CD4-positive, alpha-beta memory T cell (primary cell): ENCODE measurements at regions of chr1 and their contacts with region 1.

Region 1: DNA sequence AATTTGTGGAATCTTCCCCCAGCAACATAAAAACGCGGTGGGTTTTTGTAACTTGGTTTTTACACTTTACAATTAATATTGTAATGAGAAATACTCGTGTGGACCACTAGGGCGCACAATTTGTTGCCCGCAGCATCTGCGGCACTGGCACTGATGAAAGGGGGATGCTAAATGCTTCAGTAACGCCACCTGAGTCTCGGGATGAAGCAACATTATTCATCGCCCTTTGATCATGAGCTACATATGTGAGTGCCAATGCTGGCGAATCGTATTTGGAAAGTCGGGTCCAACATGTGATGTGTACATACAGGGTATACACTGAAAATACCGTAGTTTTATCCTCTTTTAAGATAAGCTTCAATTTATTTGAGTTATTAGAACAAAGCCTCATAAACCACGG is 34.2 kb upstream of the COX20 start:
- DNase-seq: peak; percentile 38 to 48 (median 42)
- H3K4me3 ChIP-seq: no peak overlapping the region
- H3K4me3 Mint-ChIP-seq: peak overlapping the region in 1 of 8 donors; percentile 46
- H3K27ac ChIP-seq: no peak overlapping the region
- H3K27ac Mint-ChIP-seq: peak overlapping the region in 2 of 7 donors; percentile 48 to 49
- H3K4me1 ChIP-seq: no peaks in the 10 kb centered on the region
- H3K4me1 Mint-ChIP-seq: peaks cover 2 to 4% (median 3%) of the 10 kb centered on the region in 4 donors
- H3K27me3 ChIP-seq: no peaks in the 10 kb centered on the region
- H3K27me3 Mint-ChIP-seq: peaks cover 3 to 7% of the 10 kb centered on the region in 2 donors

Region 2: DNA sequence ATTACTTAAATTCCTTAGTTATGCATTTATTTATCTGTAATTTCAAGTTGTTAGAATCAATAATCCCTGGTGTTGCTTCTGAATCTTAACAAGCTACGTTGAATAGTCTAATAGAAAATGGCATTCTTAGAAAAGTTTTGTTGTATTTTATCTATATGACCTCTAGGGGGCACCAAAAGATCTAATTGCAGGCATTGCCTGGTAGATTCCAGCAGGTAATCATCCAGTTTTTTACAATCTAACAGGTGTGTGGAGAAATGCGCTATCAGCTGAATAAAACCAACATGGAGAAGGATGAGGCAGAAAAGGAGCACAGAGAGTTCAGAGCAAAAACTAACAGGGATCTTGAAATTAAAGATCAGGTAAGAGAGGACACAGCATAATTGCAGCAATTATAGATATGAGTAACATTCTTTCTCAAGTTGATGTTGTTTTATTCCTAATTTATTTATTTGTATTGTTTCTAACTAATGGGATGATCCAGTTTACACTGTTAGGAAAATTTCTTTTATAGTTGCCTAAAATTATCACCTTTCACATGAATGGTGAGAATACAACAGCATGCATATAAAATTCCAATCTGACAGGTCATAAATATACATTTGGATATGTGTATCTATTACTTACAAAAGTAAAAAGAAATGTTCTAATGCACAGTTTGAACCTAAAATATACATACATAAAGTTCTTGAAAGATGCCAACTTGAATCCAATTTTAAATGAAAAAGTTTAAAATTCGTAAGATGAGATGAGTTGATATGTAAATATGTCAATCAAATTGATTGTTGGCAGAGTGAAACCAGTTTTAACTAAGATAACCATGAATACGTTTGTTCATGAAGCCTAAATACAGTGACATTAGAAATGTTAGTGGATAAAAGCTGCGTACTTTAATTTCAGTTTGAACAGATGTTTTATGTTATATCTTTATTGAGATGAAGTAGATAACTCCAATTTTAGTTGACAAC is 1457.0 kb before region 1 on chr1:
- CTCF ChIA-PET with region 1: no interaction called
- POLR2A ChIA-PET with region 1: no interaction called
- intact Hi-C with region 1: loop called (anchors 5 kb)
- DNase-seq: peak in 4 of 5 donors; percentile 47 to 52 (median 50)
- H3K4me3 ChIP-seq: no peak overlapping the region
- H3K4me3 Mint-ChIP-seq: no peak overlapping the region
- H3K27ac ChIP-seq: no peak overlapping the region
- H3K27ac Mint-ChIP-seq: no peak overlapping the region
- H3K4me1 ChIP-seq: no peaks in the 10 kb centered on the region
- H3K4me1 Mint-ChIP-seq: peaks cover 0 to 4% (median 3%) of the 10 kb centered on the region in 4 donors
- H3K27me3 ChIP-seq: no peaks in the 10 kb centered on the region
- H3K27me3 Mint-ChIP-seq: no peaks in the 10 kb centered on the region

Region 3: GRCh38 chr1:244788493-244789275 is 12.6 kb before region 1 on chr1:
- CTCF ChIA-PET with region 1: interaction called, 11 read pairs
- POLR2A ChIA-PET with region 1: no interaction called
- intact Hi-C with region 1: no loop called
- DNase-seq: no peak
- H3K4me3 ChIP-seq: no peak overlapping the region
- H3K4me3 Mint-ChIP-seq: no peak overlapping the region
- H3K27ac ChIP-seq: no peak overlapping the region
- H3K27ac Mint-ChIP-seq: no peak overlapping the region
- H3K4me1 ChIP-seq: no peaks in the 10 kb centered on the region
- H3K4me1 Mint-ChIP-seq: peaks cover 0 to 1% (median 0%) of the 10 kb centered on the region in 4 donors
- H3K27me3 ChIP-seq: no peaks in the 10 kb centered on the region
- H3K27me3 Mint-ChIP-seq: no peaks in the 10 kb centered on the region

Region 4: DNA sequence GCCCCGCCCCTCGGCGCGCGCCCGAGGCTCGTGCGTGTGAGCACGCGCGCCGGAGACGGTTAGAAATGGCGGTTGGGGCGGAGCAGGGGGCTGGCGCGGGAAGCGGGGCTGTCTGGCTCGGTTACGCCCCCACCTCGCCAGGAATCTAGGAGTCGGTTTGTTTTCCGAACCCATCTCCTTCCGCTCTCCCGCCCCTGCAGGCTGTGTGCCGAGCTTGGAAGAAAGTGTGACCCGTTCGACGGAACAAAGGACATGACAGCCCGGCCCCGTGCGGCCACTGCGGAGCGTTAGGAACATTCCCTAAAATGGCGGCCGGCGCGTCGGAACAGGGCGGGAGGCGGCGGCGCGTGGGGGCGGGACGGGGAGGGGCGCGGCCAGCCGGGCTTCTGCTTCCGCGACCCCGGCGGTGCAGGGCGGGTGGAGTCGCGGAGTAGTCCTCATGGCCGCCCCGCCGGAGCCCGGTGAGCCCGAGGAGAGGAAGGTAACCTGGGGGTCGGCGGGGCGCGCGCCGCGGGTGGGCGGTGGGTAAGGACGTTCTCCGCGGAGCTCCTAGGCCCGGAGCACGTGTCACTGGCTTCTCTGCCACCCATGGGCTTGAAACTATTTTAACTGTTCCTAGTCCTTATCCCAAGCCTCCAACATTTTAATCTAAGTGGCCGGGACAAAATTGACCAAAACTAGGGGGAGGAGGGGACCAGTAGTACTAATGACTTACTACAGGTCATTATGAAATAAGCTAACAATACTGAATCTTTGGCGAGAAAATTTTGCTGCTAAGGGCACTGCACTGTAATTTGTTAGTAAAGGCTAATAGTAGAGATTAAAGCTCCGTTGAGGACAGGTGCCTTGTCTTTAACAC is 34.3 kb after region 1 on chr1 and contains the start of gene COX20:
- CTCF ChIA-PET with region 1: interaction called, 20 read pairs
- POLR2A ChIA-PET with region 1: interaction called, 22 read pairs
- intact Hi-C with region 1: loop called (anchors 1 kb)
- DNase-seq: peak; percentile 89 to 96 (median 94)
- H3K4me3 ChIP-seq: peak within 1 kb of the TSS; percentile 74 to 87
- H3K4me3 Mint-ChIP-seq: peak within 1 kb of the TSS; percentile 89 to 98 (median 96)
- H3K27ac ChIP-seq: peak within 1 kb of the TSS; percentile 94
- H3K27ac Mint-ChIP-seq: peak within 1 kb of the TSS; percentile 93 to 100 (median 99)
- H3K4me1 ChIP-seq: peaks cover 52% of the 10 kb centered on the region
- H3K4me1 Mint-ChIP-seq: peaks cover 35 to 67% (median 42%) of the 10 kb centered on the region in 4 donors
- H3K27me3 ChIP-seq: no peaks in the 10 kb centered on the region
- H3K27me3 Mint-ChIP-seq: no peaks in the 10 kb centered on the region
- total RNA-seq, gene COX20: 31.3 to 32.9 TPM

Region 5: DNA sequence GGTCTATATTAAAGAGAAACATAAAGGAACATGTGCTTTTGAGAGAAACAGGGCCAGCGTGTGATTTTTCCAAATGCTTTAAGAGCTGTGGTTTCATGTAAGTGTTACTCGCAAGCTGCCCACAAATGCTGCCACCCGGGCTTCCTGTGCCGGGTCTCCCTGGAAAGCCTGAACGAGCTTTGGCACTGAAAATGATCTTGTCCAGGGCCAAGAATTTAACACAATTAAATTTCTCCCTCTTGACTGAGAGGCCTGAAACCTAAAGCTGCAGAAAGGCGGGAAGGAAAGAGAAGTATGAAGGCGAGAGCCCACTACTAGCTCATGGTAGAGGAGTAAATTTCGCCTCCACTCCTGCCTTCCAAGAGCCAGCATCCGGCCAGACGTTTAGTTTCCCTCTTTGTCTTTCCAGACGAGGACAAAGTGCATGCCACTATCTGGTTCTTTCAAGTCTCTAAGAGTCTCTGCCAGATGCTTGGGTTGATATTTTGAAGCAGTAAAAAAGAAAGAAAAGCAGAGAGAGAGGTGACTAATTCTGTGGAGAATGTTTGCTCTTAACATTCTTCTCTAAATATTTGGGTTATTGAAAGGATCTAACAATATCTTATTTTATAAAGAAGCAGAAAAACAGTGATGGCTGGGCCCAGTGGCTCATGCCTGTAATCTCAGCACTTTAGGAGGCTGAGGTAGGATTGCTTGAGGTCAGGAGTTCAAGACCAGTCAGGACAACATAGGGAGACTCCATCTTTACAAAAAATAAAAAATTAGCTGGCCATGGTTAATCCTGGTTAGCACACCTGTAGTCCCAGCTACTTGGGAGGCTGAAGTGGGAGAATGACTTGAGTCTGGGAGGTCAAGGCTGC is 163.1 kb after region 1 on chr1:
- CTCF ChIA-PET with region 1: interaction called, 11 read pairs
- POLR2A ChIA-PET with region 1: interaction called, 9 read pairs
- intact Hi-C with region 1: no loop called
- DNase-seq: peak in 1 of 5 donors; percentile 12
- H3K4me3 ChIP-seq: no peak overlapping the region
- H3K4me3 Mint-ChIP-seq: peak overlapping the region in 5 of 8 donors; percentile 6 to 52 (median 28)
- H3K27ac ChIP-seq: no peak overlapping the region
- H3K27ac Mint-ChIP-seq: peak overlapping the region; percentile 49 to 83 (median 74)
- H3K4me1 ChIP-seq: peaks cover 25% of the 10 kb centered on the region
- H3K4me1 Mint-ChIP-seq: peaks cover 13 to 23% (median 21%) of the 10 kb centered on the region in 4 donors
- H3K27me3 ChIP-seq: no peaks in the 10 kb centered on the region
- H3K27me3 Mint-ChIP-seq: no peaks in the 10 kb centered on the region

Region 6: GRCh38 chr1:245036102-245036501 is 234.9 kb after region 1 on chr1:
- CTCF ChIA-PET with region 1: interaction called, 231 read pairs
- POLR2A ChIA-PET with region 1: no interaction called
- intact Hi-C with region 1: no loop called
- DNase-seq: no peak
- H3K4me3 ChIP-seq: no peak overlapping the region
- H3K4me3 Mint-ChIP-seq: no peak overlapping the region
- H3K27ac ChIP-seq: no peak overlapping the region
- H3K27ac Mint-ChIP-seq: no peak overlapping the region
- H3K4me1 ChIP-seq: no peaks in the 10 kb centered on the region
- H3K4me1 Mint-ChIP-seq: no peaks in the 10 kb centered on the region
- H3K27me3 ChIP-seq: no peaks in the 10 kb centered on the region
- H3K27me3 Mint-ChIP-seq: peaks cover 0 to 1% of the 10 kb centered on the region in 2 donors

Region 7: GRCh38 chr1:245051349-245052221 is 250.3 kb after region 1 on chr1:
- CTCF ChIA-PET with region 1: interaction called, 27 read pairs
- POLR2A ChIA-PET with region 1: no interaction called
- intact Hi-C with region 1: no loop called
- DNase-seq: no peak
- H3K4me3 ChIP-seq: no peak overlapping the region
- H3K4me3 Mint-ChIP-seq: peak overlapping the region; percentile 19 to 68 (median 46)
- H3K27ac ChIP-seq: no peak overlapping the region
- H3K27ac Mint-ChIP-seq: peak overlapping the region in 5 of 7 donors; percentile 12 to 65 (median 43)
- H3K4me1 ChIP-seq: peaks cover 4% of the 10 kb centered on the region
- H3K4me1 Mint-ChIP-seq: peaks cover 7 to 14% (median 11%) of the 10 kb centered on the region in 4 donors
- H3K27me3 ChIP-seq: no peaks in the 10 kb centered on the region
- H3K27me3 Mint-ChIP-seq: peaks cover 7 to 9% of the 10 kb centered on the region in 2 donors